WTC11 (cell line): ENCODE measurements at regions of chr20 and their contacts with region 1.

Region 1: DNA sequence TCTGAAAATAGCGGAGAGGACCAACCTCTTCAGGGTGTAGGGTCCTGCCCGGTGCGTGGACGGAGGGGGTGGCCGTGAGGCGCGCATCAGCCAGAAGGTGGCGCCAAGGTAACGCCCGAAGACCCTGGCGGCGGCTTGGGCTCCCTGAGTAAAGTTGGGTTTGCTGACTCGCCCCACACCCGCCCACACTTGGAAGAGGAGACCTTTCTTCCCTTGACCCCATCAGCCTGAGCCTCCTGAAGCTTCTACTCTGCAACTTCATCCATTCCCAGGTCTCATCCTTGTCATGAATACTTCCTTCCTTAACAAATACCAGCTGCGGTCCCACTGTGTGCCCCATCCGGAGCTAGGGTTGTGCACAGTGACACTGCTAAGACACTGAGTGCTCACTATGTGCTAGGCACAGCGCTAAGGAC is 14.6 kb downstream of the CD40 start:
- DNase-seq: peak; percentile 86
- ATAC-seq: peak; percentile 83
- H3K4me3 Mint-ChIP-seq: no peak overlapping the region
- H3K27ac Mint-ChIP-seq: no peak overlapping the region
- H3K4me1 Mint-ChIP-seq: peaks cover 17% of the 10 kb centered on the region
- H3K27me3 Mint-ChIP-seq: peaks cover 17% of the 10 kb centered on the region
- CTCF ChIP-seq: peak; percentile 78

Region 2: GRCh38 chr20:46013826-46014516 is 118.7 kb before region 1 on chr20:
- CTCF ChIA-PET with region 1: interaction called, 24 read pairs
- POLR2A ChIA-PET with region 1: no interaction called
- DNase-seq: peak; percentile 91
- ATAC-seq: peak; percentile 60
- H3K4me3 Mint-ChIP-seq: peak overlapping the region; percentile 65
- H3K27ac Mint-ChIP-seq: no peak overlapping the region; the same call in 1 of the 2 replicates
- H3K4me1 Mint-ChIP-seq: peaks cover 39% of the 10 kb centered on the region
- H3K27me3 Mint-ChIP-seq: peaks cover 31% of the 10 kb centered on the region
- CTCF ChIP-seq: peak; percentile 83

Region 3: DNA sequence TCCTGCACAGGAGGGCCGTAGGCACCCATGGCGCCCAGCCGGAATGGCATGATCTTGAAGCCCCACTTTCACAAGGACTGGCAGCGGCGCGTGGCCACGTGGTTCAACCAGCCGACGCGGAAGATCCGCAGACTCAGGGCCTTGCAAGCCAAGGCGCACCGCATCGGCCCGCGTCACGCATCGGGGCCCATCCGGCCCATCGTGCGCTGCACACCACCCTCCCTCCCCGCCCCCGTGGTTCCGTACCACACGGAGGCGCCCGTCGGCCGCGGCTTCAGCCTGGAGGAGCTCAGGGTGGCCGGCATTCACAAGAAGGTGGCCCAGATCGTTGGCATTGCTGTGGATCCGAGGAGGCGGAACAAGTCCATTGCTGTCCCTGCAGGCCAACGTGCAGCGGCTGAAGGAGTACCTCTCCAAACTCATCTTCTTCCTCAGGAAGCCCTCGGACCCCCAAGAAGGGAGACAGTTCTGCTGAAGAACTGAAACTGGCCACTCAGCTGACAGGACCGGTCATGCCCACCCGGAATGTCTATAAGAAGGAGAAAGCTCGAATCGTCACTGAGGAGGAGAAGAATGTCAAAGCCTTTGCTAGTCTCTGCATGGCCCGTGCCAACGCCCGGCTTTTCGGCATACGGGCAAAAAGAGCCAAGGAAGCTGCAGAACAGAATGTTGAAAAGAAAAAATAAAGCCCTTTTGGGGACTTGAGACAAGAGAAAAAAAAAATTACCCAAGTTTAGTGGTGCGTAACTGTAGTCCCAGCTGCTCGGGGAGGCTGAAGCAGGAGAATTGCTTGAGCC is 33.0 kb before region 1 on chr20:
- CTCF ChIA-PET with region 1: interaction called, 18 read pairs
- POLR2A ChIA-PET with region 1: no interaction called
- DNase-seq: peak; percentile 76
- ATAC-seq: peak; percentile 98
- H3K4me3 Mint-ChIP-seq: peak overlapping the region; percentile 37
- H3K27ac Mint-ChIP-seq: no peak overlapping the region
- H3K4me1 Mint-ChIP-seq: peaks cover 6% of the 10 kb centered on the region
- H3K27me3 Mint-ChIP-seq: peaks cover 52% of the 10 kb centered on the region
- CTCF ChIP-seq: no peak

Region 4: GRCh38 chr20:46151936-46152335 is 19.2 kb after region 1 on chr20:
- CTCF ChIA-PET with region 1: interaction called, 21 read pairs
- POLR2A ChIA-PET with region 1: no interaction called
- DNase-seq: peak; percentile 77
- ATAC-seq: peak; percentile 87
- H3K4me3 Mint-ChIP-seq: no peak overlapping the region
- H3K27ac Mint-ChIP-seq: no peak overlapping the region
- H3K4me1 Mint-ChIP-seq: peaks cover 3% of the 10 kb centered on the region
- H3K27me3 Mint-ChIP-seq: no peaks in the 10 kb centered on the region
- CTCF ChIP-seq: peak; percentile 51

Region 5: DNA sequence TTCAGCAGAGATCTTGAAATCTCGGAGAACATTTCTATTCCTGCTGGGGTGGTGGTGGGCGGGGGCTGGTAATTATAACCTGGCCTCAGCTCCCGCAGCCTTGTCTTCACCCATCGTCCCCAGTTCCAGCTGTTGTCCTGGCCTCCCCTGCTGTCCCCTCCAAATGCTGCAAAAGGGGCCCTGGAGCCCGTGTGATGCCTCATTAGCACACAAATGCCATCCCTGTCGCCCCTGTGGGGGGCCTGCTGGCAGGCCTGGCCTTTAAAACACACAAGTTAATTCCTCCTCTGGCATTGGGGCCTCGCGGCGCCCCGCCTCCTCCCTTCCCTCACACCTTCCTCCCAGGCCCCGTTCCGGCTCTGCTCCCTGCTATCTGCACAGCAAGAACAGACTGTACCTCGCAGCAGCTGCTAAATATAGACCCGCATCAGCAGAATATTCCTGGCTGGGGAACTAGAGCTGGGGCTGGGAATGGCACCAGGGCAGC is 89.9 kb after region 1 on chr20:
- CTCF ChIA-PET with region 1: no interaction called
- POLR2A ChIA-PET with region 1: no interaction called
- DNase-seq: peak; percentile 62
- ATAC-seq: peak; percentile 58
- H3K4me3 Mint-ChIP-seq: 0 out of 2 replicates have a peak overlapping the region, but pooled peaks have one; percentile 18
- H3K27ac Mint-ChIP-seq: no peak overlapping the region
- H3K4me1 Mint-ChIP-seq: peaks cover 56% of the 10 kb centered on the region
- H3K27me3 Mint-ChIP-seq: peaks cover 3% of the 10 kb centered on the region
- CTCF ChIP-seq: no peak

Region 6: DNA sequence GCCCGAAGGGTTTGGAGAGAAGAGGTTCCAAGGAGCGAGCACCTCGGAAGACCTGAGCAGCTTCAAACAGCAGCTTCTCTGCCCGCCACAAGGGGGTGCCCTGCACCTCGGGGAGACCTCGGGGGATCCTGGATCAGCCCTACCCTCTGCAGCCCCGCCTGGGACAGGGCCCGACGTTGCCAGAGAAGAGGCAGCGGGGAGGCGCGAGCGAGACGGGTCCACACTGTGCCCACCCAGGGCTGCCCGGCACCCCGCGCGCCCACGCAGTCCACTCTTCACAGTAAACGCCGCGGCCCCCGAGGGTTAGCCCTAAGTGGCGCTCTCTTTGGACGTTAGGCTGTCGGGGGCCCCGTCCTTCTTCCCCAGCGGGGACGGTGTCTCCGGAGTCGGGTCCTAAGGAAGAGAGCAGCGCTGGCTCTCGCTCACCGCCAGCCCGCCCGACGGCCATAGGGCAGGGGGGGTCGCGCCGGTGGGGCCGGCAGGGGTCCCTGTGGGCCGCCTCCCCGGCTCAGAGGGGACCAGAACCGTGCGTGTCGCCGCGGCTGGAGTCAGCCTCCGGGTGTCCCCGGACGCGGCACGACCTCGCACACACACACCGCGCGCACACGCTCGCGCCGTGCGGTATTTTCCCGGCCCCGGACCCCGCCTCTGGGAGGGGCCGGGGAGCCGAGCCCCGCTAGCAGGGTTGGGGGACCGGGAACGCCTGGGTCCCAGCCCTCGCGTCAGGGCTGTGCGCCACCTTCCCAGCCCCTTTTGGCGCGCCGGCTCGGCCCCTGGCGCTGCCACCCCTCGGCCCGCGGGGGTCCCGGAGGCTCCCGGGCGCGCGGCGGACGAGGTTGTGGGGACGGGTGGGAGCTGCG is 174.7 kb after region 1 on chr20:
- CTCF ChIA-PET with region 1: interaction called, 38 read pairs
- POLR2A ChIA-PET with region 1: no interaction called
- DNase-seq: peak; percentile 82
- ATAC-seq: peak; percentile 89
- H3K4me3 Mint-ChIP-seq: peak overlapping the region; percentile 52
- H3K27ac Mint-ChIP-seq: no peak overlapping the region
- H3K4me1 Mint-ChIP-seq: peaks cover 11% of the 10 kb centered on the region
- H3K27me3 Mint-ChIP-seq: peaks cover 72% of the 10 kb centered on the region
- CTCF ChIP-seq: peak; percentile 87